Mucosa of descending colon (tissue), 3 donors: ENCODE measurements at regions of chr13 and their contacts with region 1.

Region 1: GRCh38 chr13:30802953-30803478 is 67.7 kb downstream of the ALOX5AP start:
- DNase-seq: peak; percentile 89 to 91 (median 91)
- ATAC-seq: peak; percentile 98
- H3K4me3 ChIP-seq: no peak overlapping the region
- H3K4me1 ChIP-seq: peaks cover 7% of the 10 kb centered on the region
- CTCF ChIP-seq: peak; percentile 80

Region 2: DNA sequence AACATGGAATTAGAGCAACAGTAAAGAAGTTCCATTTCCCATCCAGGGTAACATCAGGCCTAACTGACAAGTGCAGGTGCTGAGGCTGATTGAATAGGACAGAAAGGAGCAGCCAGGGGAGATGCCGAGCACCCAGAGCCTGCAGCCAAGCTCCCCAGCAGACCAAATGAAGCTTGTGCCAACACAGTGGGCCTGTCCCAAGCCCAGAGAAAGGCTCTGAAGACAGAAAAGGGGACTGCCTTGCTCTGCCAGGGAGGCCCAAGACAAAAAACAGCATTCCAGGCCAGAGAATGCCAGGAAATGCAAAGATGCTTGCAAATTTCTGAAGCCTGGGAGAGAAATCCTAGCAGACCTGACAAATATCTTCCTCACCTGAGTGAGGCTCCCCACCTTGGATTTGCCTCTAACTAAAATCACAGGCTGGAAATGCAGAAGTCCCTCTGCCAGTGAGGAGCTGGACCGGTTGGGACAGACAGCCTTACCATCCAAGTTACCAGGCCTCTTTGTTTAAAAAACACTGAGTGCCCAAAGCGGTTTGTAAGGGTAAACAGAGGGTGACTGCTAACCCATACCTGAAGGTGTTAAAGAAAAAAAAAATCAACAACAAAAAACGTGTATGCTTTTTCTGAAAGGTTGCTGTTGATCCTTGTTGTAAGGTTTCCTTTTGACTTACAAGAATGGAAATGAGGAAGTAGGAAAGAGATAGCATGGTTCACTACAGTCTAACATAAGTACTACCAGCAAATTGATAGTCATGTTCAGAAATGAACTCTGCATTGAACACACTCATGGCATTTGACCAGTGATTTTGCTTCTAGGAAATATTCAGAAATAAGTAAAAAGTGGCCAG is 325.4 kb before region 1 on chr13:
- intact Hi-C with region 1: loop called in 1 of 2 experiments (anchors 10 kb)
- DNase-seq: no peak
- ATAC-seq: no peak
- H3K4me3 ChIP-seq: no peak overlapping the region
- H3K4me1 ChIP-seq: no peaks in the 10 kb centered on the region
- CTCF ChIP-seq: no peak

Region 3: DNA sequence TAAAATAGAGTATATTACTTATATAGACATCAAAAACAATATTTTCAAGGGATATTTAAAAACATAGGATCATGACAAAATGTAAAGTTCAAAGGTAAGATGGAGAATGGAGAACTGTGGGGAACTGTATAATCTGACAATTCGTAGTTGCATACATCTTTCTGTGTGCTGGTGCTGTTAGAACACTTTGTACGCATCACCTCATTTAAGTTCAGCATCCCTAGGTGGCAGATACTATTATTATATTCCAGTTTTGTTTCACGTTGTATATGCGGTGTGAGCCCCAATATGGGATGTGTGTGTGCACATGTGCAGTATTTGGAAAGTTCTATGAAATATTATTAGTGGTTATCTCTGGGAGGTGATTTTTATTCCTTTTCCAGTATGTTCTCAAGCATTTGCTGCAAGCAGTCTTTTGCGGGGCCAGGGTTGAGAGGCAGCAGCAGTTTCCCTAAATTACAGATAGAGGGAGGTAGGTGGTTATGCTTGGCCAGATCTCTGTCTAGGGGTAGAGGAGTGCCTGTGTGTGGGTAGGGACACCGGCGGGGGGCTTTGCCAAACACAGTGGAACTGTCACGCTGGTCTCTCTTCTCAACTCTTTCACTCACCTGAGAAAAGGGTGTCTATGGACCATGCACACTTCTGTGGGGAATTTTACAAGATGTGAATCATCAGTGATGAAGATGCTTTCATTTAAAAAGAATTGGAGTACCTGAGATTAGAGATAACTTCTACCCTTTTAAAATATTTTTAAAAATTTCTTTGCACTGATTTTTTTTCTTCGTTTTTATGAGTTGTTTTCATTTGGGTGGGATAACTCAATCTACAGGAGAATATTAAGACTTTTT is 123.3 kb before region 1 on chr13:
- intact Hi-C with region 1: loop called in 1 of 2 experiments (anchors 5 kb)
- DNase-seq: no peak
- ATAC-seq: peak; percentile 56
- H3K4me3 ChIP-seq: no peak overlapping the region
- H3K4me1 ChIP-seq: no peaks in the 10 kb centered on the region
- CTCF ChIP-seq: no peak